CD4-positive, alpha-beta memory T cell (primary cell): ENCODE measurements at regions of chr7 and their contacts with region 1.

Region 1: GRCh38 chr7:44847508-44847920 is 373 bp downstream of the H2AZ2 start:
- DNase-seq: peak; percentile 91 to 93 (median 92)
- H3K4me3 ChIP-seq: peak overlapping the region; percentile 49 to 62
- H3K4me3 Mint-ChIP-seq: peak overlapping the region; percentile 87 to 98 (median 96)
- H3K27ac ChIP-seq: peak overlapping the region; percentile 90
- H3K27ac Mint-ChIP-seq: peak overlapping the region; percentile 97 to 100 (median 100)
- H3K4me1 ChIP-seq: peaks cover 29% of the 10 kb centered on the region
- H3K4me1 Mint-ChIP-seq: peaks cover 18 to 46% (median 25%) of the 10 kb centered on the region in 4 donors
- H3K27me3 ChIP-seq: no peaks in the 10 kb centered on the region
- H3K27me3 Mint-ChIP-seq: peaks cover 0 to 1% of the 10 kb centered on the region in 2 donors

Region 2: DNA sequence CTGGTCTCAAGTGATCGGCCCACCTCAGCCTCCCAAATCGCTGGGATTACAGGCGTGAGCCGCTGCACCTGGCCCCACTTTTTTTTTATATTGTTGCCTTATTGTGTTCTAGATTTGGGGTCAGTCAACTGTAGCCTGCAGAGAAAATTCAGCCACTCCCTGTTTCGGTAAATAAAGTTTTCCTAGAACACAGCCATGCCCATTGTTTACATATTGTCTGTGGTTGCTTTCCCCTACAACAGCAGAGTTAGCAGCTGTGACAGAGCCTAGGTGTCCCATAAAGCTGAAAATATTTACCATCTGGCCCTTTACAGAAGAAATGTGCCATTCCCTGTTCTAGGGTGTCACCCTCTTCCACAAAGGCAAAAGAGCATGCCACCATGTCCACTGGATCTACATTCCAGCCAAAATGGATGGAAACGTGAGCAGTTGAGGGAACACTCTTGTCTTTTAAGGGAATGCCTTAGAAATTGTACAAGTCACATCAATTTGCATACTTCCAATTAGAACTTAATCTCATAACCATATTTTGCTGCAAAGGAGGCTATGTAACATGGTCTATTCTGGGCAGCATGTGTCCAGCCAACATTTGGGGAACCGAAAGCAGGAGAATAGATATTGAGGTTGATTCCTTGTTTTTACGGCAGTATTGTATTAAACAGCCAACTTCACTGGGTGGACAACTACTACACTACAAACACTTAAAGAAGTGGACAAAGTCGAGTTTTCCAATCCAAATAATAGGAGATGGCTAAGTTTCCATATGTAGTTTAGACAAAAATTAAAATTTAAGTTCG is 1100.0 kb before region 1 on chr7:
- CTCF ChIA-PET with region 1: no interaction called
- POLR2A ChIA-PET with region 1: no interaction called
- intact Hi-C with region 1: no loop called
- DNase-seq: no peak
- H3K4me3 ChIP-seq: no peak overlapping the region
- H3K4me3 Mint-ChIP-seq: no peak overlapping the region
- H3K27ac ChIP-seq: no peak overlapping the region
- H3K27ac Mint-ChIP-seq: no peak overlapping the region
- H3K4me1 ChIP-seq: no peaks in the 10 kb centered on the region
- H3K4me1 Mint-ChIP-seq: peaks cover 0 to 1% (median 0%) of the 10 kb centered on the region in 4 donors
- H3K27me3 ChIP-seq: no peaks in the 10 kb centered on the region
- H3K27me3 Mint-ChIP-seq: peaks cover 1 to 2% of the 10 kb centered on the region in 2 donors

Region 3: DNA sequence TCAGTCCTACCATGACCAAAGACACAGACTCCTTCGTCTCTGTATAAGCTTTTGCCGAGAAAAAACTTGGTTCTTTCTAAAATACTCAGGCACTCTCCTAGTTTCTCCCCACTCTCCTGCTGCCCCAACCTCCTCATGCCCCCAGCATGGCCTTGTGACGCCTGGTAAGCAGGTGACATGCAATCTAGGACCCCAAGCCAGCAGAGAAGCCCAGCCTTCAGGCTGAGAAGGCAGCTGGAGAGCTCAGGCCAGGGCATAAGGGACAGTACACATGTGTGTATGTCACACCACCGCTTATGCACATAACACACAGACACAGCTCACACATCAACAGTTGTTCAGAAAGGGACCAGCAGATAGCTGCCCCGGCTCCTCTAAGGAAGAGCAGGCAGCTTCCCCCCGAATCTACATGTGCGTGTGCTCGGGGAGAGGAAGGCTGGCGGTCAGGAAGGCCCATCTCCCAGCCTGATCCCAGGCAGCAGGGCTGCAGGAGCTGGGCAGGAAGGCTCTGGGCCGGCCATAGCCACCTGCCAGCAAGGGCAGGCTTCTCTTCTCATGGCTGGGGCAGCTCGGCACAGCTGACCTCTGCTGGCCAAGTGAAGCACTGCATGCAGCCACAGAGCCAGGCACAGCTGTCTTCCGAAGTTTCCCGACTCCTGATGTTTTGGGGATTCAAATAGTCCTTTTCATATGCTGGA is 282.3 kb before region 1 on chr7:
- CTCF ChIA-PET with region 1: interaction called, 12 read pairs
- POLR2A ChIA-PET with region 1: interaction called, 4 read pairs
- intact Hi-C with region 1: no loop called
- DNase-seq: peak; percentile 50 to 67 (median 58)
- H3K4me3 ChIP-seq: no peak overlapping the region
- H3K4me3 Mint-ChIP-seq: peak overlapping the region in 1 of 8 donors; percentile 11
- H3K27ac ChIP-seq: no peak overlapping the region
- H3K27ac Mint-ChIP-seq: peak overlapping the region in 6 of 7 donors; percentile 50 to 87 (median 72)
- H3K4me1 ChIP-seq: peaks cover 10% of the 10 kb centered on the region
- H3K4me1 Mint-ChIP-seq: peaks cover 1 to 11% (median 7%) of the 10 kb centered on the region in 4 donors
- H3K27me3 ChIP-seq: no peaks in the 10 kb centered on the region
- H3K27me3 Mint-ChIP-seq: no peaks in the 10 kb centered on the region

Region 4: DNA sequence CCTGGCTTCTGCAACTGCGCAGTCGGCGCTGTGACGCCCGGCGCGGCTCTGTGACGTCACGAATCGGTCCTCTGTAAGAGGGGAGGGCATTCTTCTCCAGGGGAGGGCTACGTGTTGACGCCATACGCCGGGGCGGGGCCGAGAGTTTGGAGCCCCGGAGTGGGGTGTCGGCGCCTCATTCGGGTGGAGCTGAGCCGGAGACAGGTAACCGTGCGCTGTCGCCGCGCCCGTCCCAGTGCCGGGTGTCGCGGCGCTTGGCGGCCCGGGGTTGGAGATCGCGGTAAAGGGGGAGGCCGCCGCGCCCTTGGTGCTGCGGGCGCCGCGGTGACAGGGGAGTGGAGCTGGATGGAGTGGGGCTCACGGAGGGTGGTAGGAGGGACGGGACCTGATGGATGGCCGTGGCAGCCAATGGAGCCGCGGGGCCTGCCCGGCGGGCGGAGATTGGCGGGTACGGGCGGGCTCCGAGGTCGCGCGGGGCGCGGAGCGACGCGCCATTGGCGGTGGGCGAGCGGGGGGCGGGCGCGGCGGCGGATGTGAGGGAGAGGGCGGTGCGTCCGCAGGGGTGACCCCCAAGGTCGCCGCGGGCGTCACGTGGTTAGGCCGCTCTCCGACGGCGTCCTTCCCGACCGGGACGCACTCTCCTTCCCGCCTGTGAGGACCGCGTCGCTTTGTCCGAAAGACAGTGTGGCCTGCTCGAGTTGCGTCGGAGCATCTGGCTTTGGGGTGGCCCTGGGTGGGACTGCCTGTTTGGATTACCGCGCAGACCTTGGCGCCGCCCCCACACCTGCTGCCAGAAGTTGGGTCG is 240.9 kb before region 1 on chr7 and contains the start of gene OGDH:
- CTCF ChIA-PET with region 1: interaction called, 3 read pairs
- POLR2A ChIA-PET with region 1: interaction called, 50 read pairs
- intact Hi-C with region 1: loop called (anchors 1 kb)
- DNase-seq: peak; percentile 99 to 100 (median 100)
- H3K4me3 ChIP-seq: peak within 1 kb of the TSS; percentile 54 to 63
- H3K4me3 Mint-ChIP-seq: peak within 1 kb of the TSS; percentile 82 to 100 (median 98)
- H3K27ac ChIP-seq: peak within 1 kb of the TSS; percentile 97
- H3K27ac Mint-ChIP-seq: peak within 1 kb of the TSS; percentile 99 to 100 (median 99)
- H3K4me1 ChIP-seq: peaks cover 40% of the 10 kb centered on the region
- H3K4me1 Mint-ChIP-seq: peaks cover 19 to 50% (median 38%) of the 10 kb centered on the region in 4 donors
- H3K27me3 ChIP-seq: no peaks in the 10 kb centered on the region
- H3K27me3 Mint-ChIP-seq: peaks cover 0 to 2% of the 10 kb centered on the region in 2 donors
- total RNA-seq, gene OGDH: 116 to 126 TPM

Region 5: GRCh38 chr7:44748045-44748947 is 99.2 kb before region 1 on chr7 and contains the start of gene ZMIZ2:
- CTCF ChIA-PET with region 1: interaction called, 3 read pairs
- POLR2A ChIA-PET with region 1: interaction called, 25 read pairs
- intact Hi-C with region 1: loop called (anchors 1 kb)
- DNase-seq: peak; percentile 88 to 98 (median 92)
- H3K4me3 ChIP-seq: peak within 1 kb of the TSS; percentile 44 to 78
- H3K4me3 Mint-ChIP-seq: peak within 1 kb of the TSS; percentile 80 to 95 (median 86)
- H3K27ac ChIP-seq: peak within 1 kb of the TSS; percentile 90
- H3K27ac Mint-ChIP-seq: peak within 1 kb of the TSS; percentile 89 to 98 (median 96)
- H3K4me1 ChIP-seq: peaks cover 44% of the 10 kb centered on the region
- H3K4me1 Mint-ChIP-seq: peaks cover 33 to 51% (median 38%) of the 10 kb centered on the region in 4 donors
- H3K27me3 ChIP-seq: no peaks in the 10 kb centered on the region
- H3K27me3 Mint-ChIP-seq: no peaks in the 10 kb centered on the region
- total RNA-seq, gene ZMIZ2: 169 to 170 TPM

Region 6: DNA sequence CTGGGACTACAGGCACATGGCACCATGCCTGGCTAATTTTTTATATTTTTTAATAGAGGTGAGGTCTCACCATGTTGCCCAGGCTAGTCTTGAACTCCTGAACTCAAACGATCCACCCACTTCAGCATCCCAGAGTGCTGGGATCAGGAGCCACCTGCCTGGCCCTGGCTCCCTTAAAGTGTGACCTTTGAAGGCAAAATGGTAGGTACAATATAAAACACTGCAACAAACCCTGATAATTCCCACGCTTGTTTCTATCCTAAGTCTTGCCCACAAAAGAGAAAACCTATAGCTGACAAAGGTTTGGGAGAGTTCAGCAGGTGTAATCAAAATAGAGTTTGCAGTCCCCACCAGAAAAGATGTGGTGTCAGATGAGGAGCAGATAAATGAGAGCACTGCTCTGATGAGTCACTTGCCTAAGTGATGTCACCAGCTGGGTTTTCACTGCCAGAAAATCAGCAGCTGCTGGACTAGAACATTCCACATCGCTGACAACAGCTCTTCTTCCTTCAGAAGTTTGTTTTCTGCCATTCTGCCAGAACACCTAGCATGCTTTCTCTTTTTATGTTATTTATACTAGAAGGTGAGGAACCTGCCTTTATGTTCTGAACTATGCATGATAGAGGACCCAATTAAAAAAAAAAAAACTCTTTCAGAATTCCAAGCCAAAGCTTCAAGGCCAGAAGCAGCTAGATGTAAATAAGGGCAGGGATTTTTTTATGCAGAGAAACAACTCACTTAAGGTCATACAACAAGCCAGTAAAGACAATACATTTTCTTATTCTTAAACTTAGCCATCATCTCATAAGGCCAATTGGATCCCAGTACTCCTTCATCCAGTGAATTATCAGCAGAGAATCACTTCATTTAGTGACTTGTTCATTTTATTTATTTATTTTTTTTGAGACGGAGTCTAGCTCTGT is 19.8 kb after region 1 on chr7:
- CTCF ChIA-PET with region 1: no interaction called
- POLR2A ChIA-PET with region 1: no interaction called
- intact Hi-C with region 1: no loop called
- DNase-seq: peak in 1 of 5 donors; percentile 39
- H3K4me3 ChIP-seq: no peak overlapping the region
- H3K4me3 Mint-ChIP-seq: no peak overlapping the region
- H3K27ac ChIP-seq: no peak overlapping the region
- H3K27ac Mint-ChIP-seq: no peak overlapping the region
- H3K4me1 ChIP-seq: no peaks in the 10 kb centered on the region
- H3K4me1 Mint-ChIP-seq: no peaks in the 10 kb centered on the region
- H3K27me3 ChIP-seq: no peaks in the 10 kb centered on the region
- H3K27me3 Mint-ChIP-seq: peaks cover 0 to 4% of the 10 kb centered on the region in 2 donors

Region 7: GRCh38 chr7:44921607-44922359 is 74.3 kb after region 1 on chr7:
- CTCF ChIA-PET with region 1: interaction called, 12 read pairs
- POLR2A ChIA-PET with region 1: interaction called, 3 read pairs
- intact Hi-C with region 1: no loop called
- DNase-seq: peak; percentile 83 to 91 (median 86)
- H3K4me3 ChIP-seq: no peak overlapping the region
- H3K4me3 Mint-ChIP-seq: no peak overlapping the region
- H3K27ac ChIP-seq: no peak overlapping the region
- H3K27ac Mint-ChIP-seq: peak overlapping the region in 5 of 7 donors; percentile 37 to 90 (median 81)
- H3K4me1 ChIP-seq: peaks cover 4% of the 10 kb centered on the region
- H3K4me1 Mint-ChIP-seq: peaks cover 0 to 10% (median 7%) of the 10 kb centered on the region in 4 donors
- H3K27me3 ChIP-seq: no peaks in the 10 kb centered on the region
- H3K27me3 Mint-ChIP-seq: peaks cover 0 to 2% of the 10 kb centered on the region in 2 donors

Region 8: GRCh38 chr7:45111298-45112223 is 264.0 kb after region 1 on chr7 and contains the start of gene TBRG4:
- CTCF ChIA-PET with region 1: no interaction called
- POLR2A ChIA-PET with region 1: interaction called, 9 read pairs
- intact Hi-C with region 1: loop called (anchors 1 kb)
- DNase-seq: peak; percentile 91 to 94 (median 94)
- H3K4me3 ChIP-seq: peak within 1 kb of the TSS; percentile 94 to 95
- H3K4me3 Mint-ChIP-seq: peak within 1 kb of the TSS; percentile 91 to 99 (median 97)
- H3K27ac ChIP-seq: peak within 1 kb of the TSS; percentile 87
- H3K27ac Mint-ChIP-seq: peak within 1 kb of the TSS; percentile 97 to 100 (median 99)
- H3K4me1 ChIP-seq: peaks cover 48% of the 10 kb centered on the region
- H3K4me1 Mint-ChIP-seq: peaks cover 28 to 60% (median 44%) of the 10 kb centered on the region in 4 donors
- H3K27me3 ChIP-seq: no peaks in the 10 kb centered on the region
- H3K27me3 Mint-ChIP-seq: peaks cover 4% of the 10 kb centered on the region in 2 donors
- total RNA-seq, gene TBRG4: 103 to 129 TPM

Region 9: GRCh38 chr7:45342236-45342635 is 494.7 kb after region 1 on chr7:
- CTCF ChIA-PET with region 1: no interaction called
- POLR2A ChIA-PET with region 1: no interaction called
- intact Hi-C with region 1: no loop called
- DNase-seq: peak in 4 of 5 donors; percentile 0 to 2 (median 2)
- H3K4me3 ChIP-seq: no peak overlapping the region
- H3K4me3 Mint-ChIP-seq: peak overlapping the region in 6 of 8 donors; percentile 9 to 62 (median 40)
- H3K27ac ChIP-seq: no peak overlapping the region
- H3K27ac Mint-ChIP-seq: peak overlapping the region in 1 of 7 donors; percentile 45
- H3K4me1 ChIP-seq: no peaks in the 10 kb centered on the region
- H3K4me1 Mint-ChIP-seq: peaks cover 0 to 7% (median 5%) of the 10 kb centered on the region in 4 donors
- H3K27me3 ChIP-seq: no peaks in the 10 kb centered on the region
- H3K27me3 Mint-ChIP-seq: peaks cover 12 to 21% of the 10 kb centered on the region in 2 donors